ENCODE measurements at regions of chr4 and their contacts with region 1.

Region 1: DNA sequence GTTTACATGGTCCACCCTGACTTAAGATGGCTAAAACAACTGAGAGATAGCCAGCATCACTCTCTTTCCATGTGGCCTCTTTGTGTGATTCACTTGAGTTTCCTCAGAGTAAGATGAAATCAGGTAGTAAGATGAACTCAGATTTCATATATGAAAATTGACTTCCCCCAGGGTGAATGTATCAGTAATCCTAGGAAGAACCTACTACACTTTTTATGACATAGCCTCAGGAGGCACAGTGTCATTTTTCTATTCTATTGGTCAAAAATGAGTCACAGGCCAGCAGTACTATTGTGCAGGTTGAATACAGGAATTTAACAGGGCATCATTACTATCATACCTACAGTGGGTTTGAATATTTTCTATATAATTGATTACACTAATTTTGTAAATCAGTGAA is 14.6 kb upstream of the SULT1E1 start:
- DNase-seq: no peak
- H3K4me3 ChIP-seq: no peak overlapping the region
- H3K27ac ChIP-seq: no peak overlapping the region
- H3K4me1 ChIP-seq: no peaks in the 10 kb centered on the region
- H3K27me3 ChIP-seq: no peaks in the 10 kb centered on the region
- CTCF ChIP-seq: no peak
- POLR2A ChIP-seq: no peak

Region 2: GRCh38 chr4:69689599-69689998 is 184.9 kb before region 1 on chr4:
- intact Hi-C with region 1: loop called (anchors 10 kb)
- DNase-seq: no peak
- H3K4me3 ChIP-seq: no peak overlapping the region
- H3K27ac ChIP-seq: no peak overlapping the region
- H3K4me1 ChIP-seq: no peaks in the 10 kb centered on the region
- H3K27me3 ChIP-seq: no peaks in the 10 kb centered on the region
- CTCF ChIP-seq: peak in 2 of 3 experiments; percentile 20 to 43
- POLR2A ChIP-seq: no peak

Region 3: GRCh38 chr4:69743476-69744156 is 130.9 kb before region 1 on chr4:
- intact Hi-C with region 1: no loop called
- DNase-seq: no peak
- H3K4me3 ChIP-seq: no peak overlapping the region
- H3K27ac ChIP-seq: no peak overlapping the region
- H3K4me1 ChIP-seq: no peaks in the 10 kb centered on the region
- H3K27me3 ChIP-seq: no peaks in the 10 kb centered on the region
- CTCF ChIP-seq: no peak
- POLR2A ChIP-seq: no peak

Region 4: GRCh38 chr4:69760455-69760854 is 114.1 kb before region 1 on chr4 and contains the start of gene SULT1B1:
- intact Hi-C with region 1: no loop called
- DNase-seq: no peak
- H3K4me3 ChIP-seq: no peak within 1 kb of the TSS
- H3K27ac ChIP-seq: no peak within 1 kb of the TSS
- H3K4me1 ChIP-seq: no peaks in the 10 kb centered on the region
- H3K27me3 ChIP-seq: no peaks in the 10 kb centered on the region
- CTCF ChIP-seq: no peak
- POLR2A ChIP-seq: no peak
- total RNA-seq, gene SULT1B1: 0.24 to 0.31 TPM

Region 5: GRCh38 chr4:70151271-70151670 is 276.8 kb after region 1 on chr4:
- intact Hi-C with region 1: no loop called
- DNase-seq: no peak
- H3K4me3 ChIP-seq: no peak overlapping the region
- H3K27ac ChIP-seq: no peak overlapping the region
- H3K4me1 ChIP-seq: no peaks in the 10 kb centered on the region
- H3K27me3 ChIP-seq: no peaks in the 10 kb centered on the region
- CTCF ChIP-seq: no peak
- POLR2A ChIP-seq: no peak

Measured in testis (tissue), 5 donors.